Naive thymus-derived CD4-positive, alpha-beta T cell (primary cell): ENCODE measurements at regions of chr4 and their contacts with region 1.

Region 1: DNA sequence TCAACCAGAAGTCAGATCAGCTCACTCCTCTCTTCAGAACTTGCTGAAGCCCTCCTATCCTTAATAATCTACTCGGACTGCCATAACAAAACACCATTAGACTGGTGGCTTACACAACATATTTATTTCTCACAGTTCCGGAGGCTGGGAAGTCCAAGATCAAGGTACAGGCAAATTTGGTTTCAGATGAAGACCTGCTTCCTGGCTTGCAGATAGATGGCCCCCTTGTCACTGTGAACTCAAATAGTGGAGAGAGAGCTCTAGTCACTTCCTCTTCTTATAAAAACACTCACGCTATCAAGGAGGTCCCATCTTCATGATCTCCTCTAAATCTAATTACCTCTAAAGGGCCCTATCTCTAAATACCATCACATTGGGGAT is 125.1 kb downstream of the CAMK2D start:
- DNase-seq: peak in 7 of 9 donors; percentile 28 to 58 (median 38)
- ATAC-seq: peak; percentile 79
- H3K4me3 ChIP-seq: peak overlapping the region; percentile 5
- H3K4me3 Mint-ChIP-seq: peak overlapping the region; percentile 0 to 79 (median 66)
- H3K27ac ChIP-seq: no peak overlapping the region
- H3K27ac Mint-ChIP-seq: peak overlapping the region; percentile 20 to 89 (median 70)
- H3K4me1 ChIP-seq: peaks cover 15 to 23% of the 10 kb centered on the region in 2 donors
- H3K4me1 Mint-ChIP-seq: peaks cover 31 to 61% (median 51%) of the 10 kb centered on the region in 7 donors
- H3K27me3 ChIP-seq: no peaks in the 10 kb centered on the region
- H3K27me3 Mint-ChIP-seq: no peaks in the 10 kb centered on the region

Region 2: GRCh38 chr4:113547487-113548042 is 88.9 kb before region 1 on chr4:
- CTCF ChIA-PET with region 1: interaction called, 3 read pairs
- POLR2A ChIA-PET with region 1: no interaction called
- intact Hi-C with region 1: loop called (anchors 1 kb)
- DNase-seq: peak; percentile 59 to 89 (median 85)
- ATAC-seq: peak; percentile 100
- H3K4me3 ChIP-seq: no peak overlapping the region
- H3K4me3 Mint-ChIP-seq: peak overlapping the region in 1 of 10 donors; percentile 39
- H3K27ac ChIP-seq: peak overlapping the region; percentile 37
- H3K27ac Mint-ChIP-seq: peak overlapping the region; percentile 18 to 85 (median 73)
- H3K4me1 ChIP-seq: peaks cover 4 to 8% of the 10 kb centered on the region in 2 donors
- H3K4me1 Mint-ChIP-seq: peaks cover 4 to 22% (median 15%) of the 10 kb centered on the region in 7 donors
- H3K27me3 ChIP-seq: no peaks in the 10 kb centered on the region
- H3K27me3 Mint-ChIP-seq: no peaks in the 10 kb centered on the region

Region 3: GRCh38 chr4:113625902-113626301 is 10.5 kb before region 1 on chr4:
- CTCF ChIA-PET with region 1: no interaction called
- POLR2A ChIA-PET with region 1: interaction called, 3 read pairs
- intact Hi-C with region 1: loop called in 1 of 2 experiments (anchors 2 kb)
- DNase-seq: no peak
- ATAC-seq: no peak
- H3K4me3 ChIP-seq: no peak overlapping the region
- H3K4me3 Mint-ChIP-seq: no peak overlapping the region
- H3K27ac ChIP-seq: no peak overlapping the region
- H3K27ac Mint-ChIP-seq: no peak overlapping the region
- H3K4me1 ChIP-seq: peaks cover 0 to 3% of the 10 kb centered on the region in 2 donors
- H3K4me1 Mint-ChIP-seq: peaks cover 13 to 51% (median 34%) of the 10 kb centered on the region in 7 donors
- H3K27me3 ChIP-seq: no peaks in the 10 kb centered on the region
- H3K27me3 Mint-ChIP-seq: no peaks in the 10 kb centered on the region

Region 4: DNA sequence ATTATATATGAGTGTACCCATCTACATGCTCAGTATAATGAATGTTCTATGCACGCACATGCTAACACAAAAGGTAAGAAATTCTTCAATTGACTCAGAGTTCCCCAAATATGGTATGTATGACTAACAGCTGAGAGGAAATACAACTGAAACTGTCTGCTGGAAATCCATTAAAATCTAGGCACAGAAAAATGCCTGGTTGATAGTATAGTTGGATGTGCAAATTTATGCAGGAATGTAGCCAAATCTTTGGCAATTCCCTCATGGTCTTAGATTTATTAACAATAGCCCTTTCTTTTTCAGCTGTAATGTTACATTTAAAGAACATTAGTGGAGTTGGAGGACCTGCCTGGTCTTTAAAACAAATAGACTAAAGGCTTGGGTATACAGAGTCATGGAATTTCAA is 119.6 kb after region 1 on chr4:
- CTCF ChIA-PET with region 1: no interaction called
- POLR2A ChIA-PET with region 1: interaction called, 6 read pairs
- intact Hi-C with region 1: loop called in 1 of 2 experiments (anchors 1 kb)
- DNase-seq: no peak
- ATAC-seq: no peak
- H3K4me3 ChIP-seq: no peak overlapping the region
- H3K4me3 Mint-ChIP-seq: peak overlapping the region in 5 of 10 donors; percentile 6 to 73 (median 10)
- H3K27ac ChIP-seq: no peak overlapping the region
- H3K27ac Mint-ChIP-seq: peak overlapping the region in 2 of 9 donors; percentile 41 to 52
- H3K4me1 ChIP-seq: peaks cover 5 to 12% of the 10 kb centered on the region in 2 donors
- H3K4me1 Mint-ChIP-seq: peaks cover 21 to 78% (median 57%) of the 10 kb centered on the region in 7 donors
- H3K27me3 ChIP-seq: no peaks in the 10 kb centered on the region
- H3K27me3 Mint-ChIP-seq: no peaks in the 10 kb centered on the region

Region 5: DNA sequence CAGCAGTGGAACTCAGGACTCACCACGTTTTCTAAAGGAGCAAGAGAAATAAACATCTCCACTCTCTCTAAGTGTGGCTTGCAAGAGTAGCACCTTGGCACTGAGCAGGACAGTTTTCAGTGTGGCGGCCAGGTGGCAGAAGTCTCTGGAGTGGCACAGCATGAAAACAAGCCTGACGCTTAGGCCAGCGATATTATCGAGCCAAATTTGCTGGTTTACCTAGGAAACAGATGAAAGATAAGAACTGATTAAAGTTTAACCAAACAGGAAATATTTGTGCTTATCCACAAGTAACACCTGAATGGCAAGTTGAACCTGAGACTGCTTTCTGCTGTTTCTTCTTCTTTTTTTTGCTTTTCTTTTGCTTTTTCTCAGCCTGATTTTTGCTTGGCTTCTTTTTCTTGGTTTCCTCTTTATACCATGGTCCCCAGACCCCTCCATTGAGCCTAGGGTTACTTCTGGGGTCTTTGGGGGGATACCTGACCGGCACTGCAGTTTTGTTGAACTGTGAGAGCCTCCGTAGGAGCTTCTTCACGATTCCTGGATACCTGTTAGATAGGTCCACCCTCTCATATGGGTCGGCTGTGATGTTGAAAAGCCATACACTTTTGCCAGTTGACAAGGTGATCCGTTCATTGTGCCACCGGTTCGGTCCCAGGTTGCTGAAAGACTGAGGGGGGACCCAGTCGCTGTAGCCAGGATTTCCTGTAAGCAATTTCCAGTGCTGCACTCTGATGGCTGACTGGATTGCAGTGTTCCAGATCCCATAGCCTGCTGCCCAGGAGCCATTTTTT is 265.8 kb after region 1 on chr4:
- CTCF ChIA-PET with region 1: no interaction called
- POLR2A ChIA-PET with region 1: interaction called, 4 read pairs
- intact Hi-C with region 1: loop called in 1 of 2 experiments (anchors 5 kb)
- DNase-seq: peak; percentile 27 to 86 (median 72)
- ATAC-seq: peak; percentile 88
- H3K4me3 ChIP-seq: peak overlapping the region; percentile 7
- H3K4me3 Mint-ChIP-seq: peak overlapping the region; percentile 32 to 78 (median 70)
- H3K27ac ChIP-seq: peak overlapping the region; percentile 65
- H3K27ac Mint-ChIP-seq: peak overlapping the region; percentile 74 to 99 (median 96)
- H3K4me1 ChIP-seq: peaks cover 65 to 72% of the 10 kb centered on the region in 2 donors
- H3K4me1 Mint-ChIP-seq: peaks cover 23 to 87% (median 82%) of the 10 kb centered on the region in 7 donors
- H3K27me3 ChIP-seq: no peaks in the 10 kb centered on the region
- H3K27me3 Mint-ChIP-seq: no peaks in the 10 kb centered on the region

Region 6: DNA sequence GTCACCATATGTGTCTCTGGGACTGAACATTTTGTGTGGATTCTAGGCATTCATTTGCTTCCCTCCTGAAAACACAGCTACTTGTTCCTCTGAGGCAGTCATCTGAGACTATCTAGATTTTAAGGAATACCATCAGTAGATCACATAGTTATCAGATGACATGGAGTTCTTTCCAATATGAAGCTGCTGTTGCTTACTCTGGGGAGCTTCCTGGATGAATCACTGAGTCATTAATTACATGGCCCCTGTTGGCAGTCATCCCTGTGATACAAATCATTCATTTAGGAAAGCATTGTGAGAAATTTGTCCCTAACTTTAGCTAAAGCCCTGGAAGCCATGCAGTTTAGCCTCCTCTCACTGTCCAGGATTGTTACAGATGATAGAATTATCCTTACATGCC is 441.2 kb after region 1 on chr4:
- CTCF ChIA-PET with region 1: no interaction called
- POLR2A ChIA-PET with region 1: no interaction called
- intact Hi-C with region 1: loop called in 1 of 2 experiments (anchors 10 kb)
- DNase-seq: no peak
- ATAC-seq: no peak
- H3K4me3 ChIP-seq: no peak overlapping the region
- H3K4me3 Mint-ChIP-seq: no peak overlapping the region
- H3K27ac ChIP-seq: no peak overlapping the region
- H3K27ac Mint-ChIP-seq: no peak overlapping the region
- H3K4me1 ChIP-seq: no peaks in the 10 kb centered on the region
- H3K4me1 Mint-ChIP-seq: no peaks in the 10 kb centered on the region
- H3K27me3 ChIP-seq: no peaks in the 10 kb centered on the region
- H3K27me3 Mint-ChIP-seq: peaks cover 0 to 22% (median 0%) of the 10 kb centered on the region in 5 donors

Region 7: DNA sequence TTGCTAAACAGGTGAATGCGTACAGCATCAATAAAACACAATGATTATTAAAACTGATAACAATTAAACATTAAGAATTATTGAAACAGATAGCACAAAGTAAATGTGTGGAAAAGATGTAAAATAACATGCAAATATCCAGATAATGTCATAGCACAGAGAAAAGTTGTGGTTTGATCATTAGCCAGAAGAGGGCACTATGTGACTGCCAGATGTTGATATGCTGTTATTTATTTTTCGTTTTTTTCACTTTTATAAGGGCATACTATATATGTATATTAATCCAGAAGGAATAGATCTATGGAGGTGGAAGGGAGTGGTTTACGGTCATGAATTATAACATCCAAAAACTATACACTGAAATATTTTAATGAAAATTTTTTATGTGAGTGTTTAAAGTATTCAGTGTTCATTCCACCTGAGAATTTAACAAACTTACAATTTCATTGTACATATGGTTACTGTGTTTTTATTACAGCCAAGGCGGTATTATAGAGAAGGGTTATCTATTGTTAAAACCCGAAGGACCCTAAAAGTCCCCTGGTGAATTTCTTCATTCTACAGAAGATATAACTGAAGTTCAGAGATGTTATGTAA is 750.3 kb after region 1 on chr4:
- CTCF ChIA-PET with region 1: interaction called, 6 read pairs
- POLR2A ChIA-PET with region 1: no interaction called
- intact Hi-C with region 1: loop called in 1 of 2 experiments (anchors 5 kb)
- DNase-seq: peak in 2 of 9 donors; percentile 10 to 11
- ATAC-seq: no peak
- H3K4me3 ChIP-seq: no peak overlapping the region
- H3K4me3 Mint-ChIP-seq: no peak overlapping the region
- H3K27ac ChIP-seq: no peak overlapping the region
- H3K27ac Mint-ChIP-seq: no peak overlapping the region
- H3K4me1 ChIP-seq: no peaks in the 10 kb centered on the region
- H3K4me1 Mint-ChIP-seq: peaks cover 0 to 2% (median 0%) of the 10 kb centered on the region in 7 donors
- H3K27me3 ChIP-seq: no peaks in the 10 kb centered on the region
- H3K27me3 Mint-ChIP-seq: peaks cover 0 to 17% (median 14%) of the 10 kb centered on the region in 5 donors